ENCODE measurements at regions of chr16 and their contacts with region 1.

Region 1: GRCh38 chr16:22190776-22191531 is 15.1 kb upstream of the EEF2K start:
- H3K4me3 Mint-ChIP-seq: peak overlapping the region; percentile 84
- H3K27ac Mint-ChIP-seq: peak overlapping the region; percentile 100
- H3K4me1 Mint-ChIP-seq: peaks cover 52% of the 10 kb centered on the region
- H3K27me3 Mint-ChIP-seq: peaks cover 8% of the 10 kb centered on the region

Region 2: GRCh38 chr16:21599233-21600030 is 591.5 kb before region 1 on chr16 and contains the start of gene METTL9:
- intact Hi-C with region 1: loop called (anchors 5 kb)
- H3K4me3 Mint-ChIP-seq: peak within 1 kb of the TSS; percentile 91
- H3K27ac Mint-ChIP-seq: peak within 1 kb of the TSS; percentile 95
- H3K4me1 Mint-ChIP-seq: peaks cover 56% of the 10 kb centered on the region
- H3K27me3 Mint-ChIP-seq: no peaks in the 10 kb centered on the region

Region 3: DNA sequence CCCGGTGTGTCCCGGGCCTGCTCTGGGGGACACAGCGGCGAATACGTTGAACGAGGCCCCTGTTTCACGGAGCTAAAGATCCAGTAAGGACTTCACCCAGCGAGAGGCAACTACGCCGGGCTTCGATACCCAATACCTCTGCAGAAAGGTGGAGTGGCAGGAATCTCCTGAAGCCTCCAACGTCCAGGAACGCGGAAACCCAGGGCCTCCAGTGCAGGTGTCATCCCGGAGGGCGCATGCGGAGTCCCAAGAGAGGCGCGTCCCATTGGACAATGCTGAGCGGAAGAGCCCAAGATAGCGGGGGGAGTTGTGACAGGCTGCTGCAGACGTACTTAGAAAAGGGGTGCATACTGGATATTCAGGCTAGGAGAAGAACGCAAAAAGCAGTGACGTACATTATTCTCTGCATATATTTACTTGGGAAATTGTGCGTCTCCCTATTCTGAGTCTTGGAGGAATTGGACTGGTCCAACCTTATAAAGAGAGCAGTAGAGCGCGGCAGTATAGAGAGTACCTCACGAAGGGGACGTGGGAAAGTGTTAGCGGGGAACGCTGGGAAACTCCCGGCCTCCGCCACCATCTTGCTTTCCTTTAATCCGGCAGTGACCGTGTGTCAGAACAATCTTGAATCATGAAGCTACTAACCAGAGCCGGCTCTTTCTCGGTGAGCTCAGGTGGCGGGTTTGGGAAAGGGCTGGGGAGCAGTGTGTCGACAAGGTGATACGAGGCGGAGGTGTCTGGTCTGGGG is 238.0 kb before region 1 on chr16 and contains the start of gene UQCRC2:
- intact Hi-C with region 1: loop called (anchors 5 kb)
- H3K4me3 Mint-ChIP-seq: peak within 1 kb of the TSS; percentile 93
- H3K27ac Mint-ChIP-seq: peak within 1 kb of the TSS; percentile 100
- H3K4me1 Mint-ChIP-seq: peaks cover 32% of the 10 kb centered on the region
- H3K27me3 Mint-ChIP-seq: no peaks in the 10 kb centered on the region

Region 4: DNA sequence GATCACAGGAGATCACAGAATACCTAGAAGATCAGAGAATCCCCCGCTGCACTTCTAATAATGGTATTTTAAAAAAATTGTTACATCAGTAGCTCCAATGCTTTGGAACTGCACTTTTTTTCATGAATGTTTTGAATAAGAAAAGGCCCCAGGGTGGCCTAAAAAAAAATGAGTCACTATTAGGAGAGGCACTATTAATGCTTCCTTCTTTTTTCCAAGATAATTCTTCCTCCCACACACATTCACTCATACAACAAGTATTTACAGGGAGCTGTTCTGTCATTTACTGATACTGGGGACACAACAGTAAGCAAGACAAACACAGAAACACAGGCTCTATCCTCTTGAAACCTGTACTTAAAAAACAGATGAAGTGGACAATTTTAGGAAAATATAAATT is 189.4 kb before region 1 on chr16:
- intact Hi-C with region 1: loop called (anchors 1 kb)
- H3K4me3 Mint-ChIP-seq: no peak overlapping the region
- H3K27ac Mint-ChIP-seq: no peak overlapping the region
- H3K4me1 Mint-ChIP-seq: peaks cover 22% of the 10 kb centered on the region
- H3K27me3 Mint-ChIP-seq: peaks cover 9% of the 10 kb centered on the region

Region 5: DNA sequence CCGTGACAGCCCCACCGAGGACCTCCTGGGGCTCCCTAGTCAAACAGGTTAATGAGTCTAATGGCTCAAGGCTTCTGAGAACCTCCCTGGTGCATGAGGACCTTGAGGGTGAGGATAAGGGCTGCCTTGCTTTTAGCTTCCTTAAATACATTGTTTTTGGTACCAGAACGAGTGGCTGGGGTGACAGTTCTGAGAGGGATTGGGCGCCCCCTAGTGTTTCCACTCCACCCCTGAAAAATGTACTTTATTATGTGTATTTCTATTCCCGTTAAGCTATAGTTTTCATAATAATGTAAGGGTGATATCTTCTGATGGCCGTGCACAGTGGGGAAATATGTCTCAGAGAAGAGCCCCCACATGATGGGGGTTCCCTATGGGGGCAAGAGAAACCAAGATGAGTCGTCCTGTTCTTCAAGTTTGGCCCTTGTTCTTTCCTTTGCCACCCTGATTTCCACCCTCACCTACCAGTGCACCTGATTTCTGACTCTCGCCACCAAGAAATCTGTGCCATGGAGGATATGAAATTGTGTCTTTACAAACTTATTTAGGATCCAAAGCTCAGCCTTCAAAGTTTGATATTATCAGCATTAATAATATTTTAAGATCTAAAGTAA is 113.1 kb before region 1 on chr16:
- intact Hi-C with region 1: loop called (anchors 5 kb)
- H3K4me3 Mint-ChIP-seq: no peak overlapping the region
- H3K27ac Mint-ChIP-seq: no peak overlapping the region
- H3K4me1 Mint-ChIP-seq: no peaks in the 10 kb centered on the region
- H3K27me3 Mint-ChIP-seq: no peaks in the 10 kb centered on the region

Region 6: GRCh38 chr16:22206013-22206841 is 15.3 kb after region 1 on chr16 and contains the start of gene EEF2K:
- intact Hi-C with region 1: loop called (anchors 2 kb)
- H3K4me3 Mint-ChIP-seq: peak within 1 kb of the TSS; percentile 97
- H3K27ac Mint-ChIP-seq: peak within 1 kb of the TSS; percentile 99
- H3K4me1 Mint-ChIP-seq: peaks cover 46% of the 10 kb centered on the region
- H3K27me3 Mint-ChIP-seq: no peaks in the 10 kb centered on the region

Region 7: GRCh38 chr16:22297114-22297878 is 106.3 kb after region 1 on chr16 and contains the start of gene POLR3E:
- intact Hi-C with region 1: loop called (anchors 1 kb)
- H3K4me3 Mint-ChIP-seq: peak within 1 kb of the TSS; percentile 95
- H3K27ac Mint-ChIP-seq: peak within 1 kb of the TSS; percentile 94
- H3K4me1 Mint-ChIP-seq: peaks cover 41% of the 10 kb centered on the region
- H3K27me3 Mint-ChIP-seq: no peaks in the 10 kb centered on the region